Activated naive CD4-positive, alpha-beta T cell treated with anti-CD3 and anti-CD28 coated beads, Interleukin-2, amount 10 ng/mL, durations not matched to agents 7 days and 5 days (primary cell): ENCODE measurements at regions of chr6 and their contacts with region 1.

Region 1: DNA sequence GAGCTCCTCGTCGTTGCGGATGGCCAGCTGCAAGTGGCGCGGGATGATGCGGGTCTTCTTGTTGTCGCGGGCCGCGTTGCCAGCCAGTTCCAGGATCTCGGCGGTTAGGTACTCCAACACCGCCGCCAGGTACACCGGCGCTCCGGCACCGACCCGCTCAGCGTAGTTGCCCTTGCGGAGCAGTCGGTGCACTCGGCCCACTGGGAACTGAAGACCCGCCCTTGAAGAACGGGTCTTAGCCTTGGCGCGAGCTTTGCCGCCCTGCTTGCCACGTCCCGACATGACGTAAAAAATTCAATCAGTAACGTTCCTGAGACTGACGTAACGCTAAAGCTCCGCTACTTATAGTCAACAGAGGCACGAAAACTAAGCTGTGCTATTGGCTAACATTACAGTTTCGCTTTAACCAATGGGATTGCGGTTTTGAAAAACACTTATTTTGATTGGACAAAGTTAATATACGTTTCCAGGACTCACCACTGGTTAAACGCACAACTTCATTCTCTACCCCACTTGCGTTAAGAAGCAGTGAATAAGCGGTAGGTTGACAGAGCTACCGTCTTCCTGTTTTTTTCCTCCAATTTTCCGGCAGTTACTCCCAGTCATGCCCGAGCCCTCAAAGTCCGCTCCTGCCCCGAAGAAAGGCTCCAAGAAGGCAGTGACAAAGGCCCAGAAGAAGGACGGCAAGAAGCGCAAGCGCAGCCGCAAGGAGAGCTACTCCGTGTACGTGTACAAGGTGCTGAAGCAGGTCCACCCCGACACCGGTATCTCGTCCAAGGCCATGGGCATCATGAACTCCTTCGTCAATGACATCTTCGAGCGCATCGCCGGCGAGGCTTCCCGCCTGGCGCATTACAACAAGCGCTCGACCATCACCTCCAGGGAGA is 73.9 kb downstream of the OR2B2 start:
- DNase-seq: peak; percentile 92
- H3K4me3 Mint-ChIP-seq: no peak overlapping the region
- H3K27ac Mint-ChIP-seq: no peak overlapping the region
- H3K4me1 Mint-ChIP-seq: peaks cover 37% of the 10 kb centered on the region
- H3K27me3 Mint-ChIP-seq: no peaks in the 10 kb centered on the region

Region 2: GRCh38 chr6:27700337-27700736 is 138.0 kb before region 1 on chr6:
- CTCF ChIA-PET with region 1: no interaction called
- DNase-seq: no peak
- H3K4me3 Mint-ChIP-seq: no peak overlapping the region
- H3K27ac Mint-ChIP-seq: no peak overlapping the region
- H3K4me1 Mint-ChIP-seq: peaks cover 20% of the 10 kb centered on the region
- H3K27me3 Mint-ChIP-seq: no peaks in the 10 kb centered on the region

Region 3: DNA sequence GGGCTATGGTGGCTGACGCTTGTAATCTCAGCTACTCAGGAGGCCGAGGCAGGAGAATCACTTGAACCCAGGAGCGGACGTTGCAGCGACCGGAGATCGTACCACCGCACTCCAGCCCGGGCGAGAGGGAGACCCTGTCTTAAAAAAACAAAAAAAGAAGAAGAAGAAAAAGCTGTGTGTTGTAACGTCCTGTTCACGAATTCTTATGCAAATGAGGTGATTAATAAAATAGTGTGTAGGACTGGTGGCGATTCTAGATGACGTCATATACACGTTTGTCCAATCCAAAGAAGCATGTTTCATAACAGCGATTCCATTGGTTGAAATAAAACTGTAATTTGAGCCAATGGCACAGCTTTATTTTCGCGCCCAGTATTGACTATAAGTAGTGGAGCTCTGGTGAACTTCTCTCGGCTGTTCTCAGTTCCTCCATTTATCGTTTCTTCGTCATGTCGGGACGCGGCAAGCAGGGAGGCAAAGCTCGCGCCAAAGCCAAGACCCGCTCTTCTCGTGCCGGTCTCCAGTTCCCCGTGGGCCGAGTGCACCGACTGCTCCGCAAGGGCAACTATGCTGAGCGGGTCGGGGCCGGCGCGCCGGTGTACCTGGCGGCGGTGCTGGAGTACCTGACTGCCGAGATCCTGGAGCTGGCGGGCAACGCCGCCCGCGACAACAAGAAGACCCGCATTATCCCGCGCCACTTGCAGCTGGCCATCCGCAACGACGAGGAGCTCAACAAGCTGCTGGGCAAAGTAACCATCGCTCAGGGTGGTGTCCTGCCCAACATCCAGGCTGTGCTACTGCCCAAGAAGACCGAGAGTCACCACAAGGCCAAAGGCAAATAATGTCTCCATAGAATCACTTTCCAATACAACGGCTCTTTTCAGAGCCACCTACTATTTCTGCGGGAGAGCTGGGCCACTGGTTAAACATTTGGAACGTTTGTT is 26.9 kb after region 1 on chr6:
- CTCF ChIA-PET with region 1: interaction called, 13 read pairs
- DNase-seq: peak; percentile 86
- H3K4me3 Mint-ChIP-seq: peak overlapping the region; percentile 99
- H3K27ac Mint-ChIP-seq: peak overlapping the region; percentile 100
- H3K4me1 Mint-ChIP-seq: peaks cover 59% of the 10 kb centered on the region
- H3K27me3 Mint-ChIP-seq: peaks cover 11% of the 10 kb centered on the region